Activated naive CD4-positive, alpha-beta T cell treated with anti-CD3 and anti-CD28 coated beads for 36 hours (primary cell): ENCODE measurements at regions of chr2 and their contacts with region 1.

Region 1: DNA sequence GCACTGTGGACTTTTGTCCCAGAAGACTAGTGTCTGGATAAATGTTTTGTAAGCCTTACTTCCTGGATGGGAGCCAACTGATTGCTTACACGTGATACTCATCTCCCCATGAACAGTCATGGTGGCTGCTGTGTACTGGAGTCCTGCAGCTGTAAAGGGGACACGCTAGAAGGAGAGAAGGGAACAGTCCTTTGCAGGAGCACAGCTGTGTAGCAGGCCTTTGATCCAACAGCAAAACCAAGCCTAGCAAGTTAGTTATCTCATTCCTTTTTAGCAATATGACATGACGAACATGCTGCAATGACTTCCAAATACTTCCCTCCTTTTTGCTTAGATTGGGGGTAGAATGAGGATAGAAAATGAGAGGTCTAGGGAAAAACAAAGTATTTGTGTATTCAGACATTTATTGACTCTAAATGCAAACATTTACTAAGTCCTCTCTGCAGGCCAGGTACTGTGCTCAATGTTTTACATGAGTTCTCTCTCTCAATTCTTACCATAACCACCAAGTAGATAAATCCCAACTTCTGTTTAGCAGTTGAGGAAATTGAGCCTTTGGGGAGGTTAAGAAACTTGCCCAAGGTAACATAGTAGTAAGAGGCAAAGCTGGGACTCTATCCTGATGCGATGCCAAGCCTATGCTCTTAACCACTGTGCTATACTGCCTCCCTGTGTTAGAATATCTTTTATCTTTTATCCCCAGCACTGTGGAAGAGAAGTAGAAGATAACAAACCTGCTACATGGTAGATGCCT is 55.4 kb upstream of the CD28 start:
- DNase-seq: peak; percentile 26
- H3K4me3 Mint-ChIP-seq: no peak overlapping the region
- H3K27ac Mint-ChIP-seq: no peak overlapping the region
- H3K4me1 Mint-ChIP-seq: peaks cover 25% of the 10 kb centered on the region
- H3K27me3 Mint-ChIP-seq: no peaks in the 10 kb centered on the region

Region 2: GRCh38 chr2:203225423-203226039 is 425.5 kb before region 1 on chr2:
- CTCF ChIA-PET with region 1: interaction called, 4 read pairs
- intact Hi-C with region 1: loop called (anchors 1 kb)
- DNase-seq: peak; percentile 43
- H3K4me3 Mint-ChIP-seq: no peak overlapping the region
- H3K27ac Mint-ChIP-seq: no peak overlapping the region
- H3K4me1 Mint-ChIP-seq: no peaks in the 10 kb centered on the region
- H3K27me3 Mint-ChIP-seq: peaks cover 3% of the 10 kb centered on the region

Region 3: GRCh38 chr2:203484266-203485112 is 166.5 kb before region 1 on chr2:
- CTCF ChIA-PET with region 1: interaction called, 6 read pairs
- intact Hi-C with region 1: loop called (anchors 1 kb)
- DNase-seq: peak; percentile 68
- H3K4me3 Mint-ChIP-seq: no peak overlapping the region
- H3K27ac Mint-ChIP-seq: no peak overlapping the region
- H3K4me1 Mint-ChIP-seq: peaks cover 9% of the 10 kb centered on the region
- H3K27me3 Mint-ChIP-seq: no peaks in the 10 kb centered on the region